ENCODE measurements at regions of chr3 and their contacts with region 1.

Region 1: GRCh38 chr3:66816090-66816761 is 181.9 kb upstream of the KBTBD8 start:
- DNase-seq: peak; percentile 84
- H3K4me3 ChIP-seq: no peak overlapping the region
- H3K27ac ChIP-seq: no peak overlapping the region
- H3K4me1 ChIP-seq: peaks cover 12% of the 10 kb centered on the region
- H3K27me3 ChIP-seq: no peaks in the 10 kb centered on the region
- CTCF ChIP-seq: peak; percentile 46; the same call in 1 of the 2 replicates

Region 2: DNA sequence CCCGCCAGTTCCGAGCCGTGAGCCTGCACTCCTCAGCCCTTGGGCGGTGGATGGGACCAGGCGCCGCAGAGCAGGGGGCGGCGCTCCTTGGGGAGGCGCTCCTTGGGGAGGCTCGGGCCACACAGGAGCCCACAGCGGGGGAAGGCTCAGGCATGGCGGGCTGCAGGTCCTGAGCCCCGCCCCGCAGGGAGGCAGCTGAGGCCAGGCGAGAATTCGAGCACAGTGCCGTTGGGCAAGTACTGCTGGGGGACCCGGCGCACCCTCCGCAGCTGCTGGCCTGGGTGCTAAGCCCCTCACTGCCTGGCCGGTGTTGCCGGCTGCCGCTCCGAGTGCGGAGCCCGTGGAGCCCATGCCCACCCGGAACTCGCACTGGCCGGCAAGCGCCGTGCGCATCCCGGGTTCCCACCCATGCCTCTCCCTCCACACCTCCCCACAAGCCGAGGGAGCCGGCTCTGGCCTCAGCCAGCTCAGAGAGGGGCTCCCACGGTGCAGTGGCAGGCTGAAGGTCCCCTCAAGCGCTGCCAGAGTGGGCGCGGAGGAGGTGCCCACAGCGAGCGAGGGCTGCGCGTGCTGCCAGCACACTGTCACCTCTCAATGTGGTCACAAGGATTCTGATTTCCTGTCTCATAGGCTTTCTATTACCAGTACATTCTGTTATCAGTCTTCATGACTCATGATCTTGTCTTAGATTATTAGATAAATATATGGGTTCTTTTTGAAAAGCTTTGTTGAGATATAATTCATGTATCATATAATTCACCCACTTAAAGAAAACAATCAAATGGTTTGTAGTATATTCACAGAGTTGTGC is 271.4 kb before region 1 on chr3:
- CTCF ChIA-PET with region 1: interaction called, 3 read pairs
- POLR2A ChIA-PET with region 1: no interaction called
- intact Hi-C with region 1: loop called (anchors 5 kb)
- DNase-seq: no peak
- H3K4me3 ChIP-seq: no peak overlapping the region
- H3K27ac ChIP-seq: no peak overlapping the region
- H3K4me1 ChIP-seq: peaks cover 11% of the 10 kb centered on the region
- H3K27me3 ChIP-seq: no peaks in the 10 kb centered on the region
- CTCF ChIP-seq: no peak

Region 3: GRCh38 chr3:66712210-66712609 is 104.0 kb before region 1 on chr3:
- CTCF ChIA-PET with region 1: no interaction called
- POLR2A ChIA-PET with region 1: no interaction called
- intact Hi-C with region 1: no loop called
- DNase-seq: no peak
- H3K4me3 ChIP-seq: no peak overlapping the region
- H3K27ac ChIP-seq: no peak overlapping the region
- H3K4me1 ChIP-seq: no peaks in the 10 kb centered on the region
- H3K27me3 ChIP-seq: no peaks in the 10 kb centered on the region
- CTCF ChIP-seq: no peak

Region 4: DNA sequence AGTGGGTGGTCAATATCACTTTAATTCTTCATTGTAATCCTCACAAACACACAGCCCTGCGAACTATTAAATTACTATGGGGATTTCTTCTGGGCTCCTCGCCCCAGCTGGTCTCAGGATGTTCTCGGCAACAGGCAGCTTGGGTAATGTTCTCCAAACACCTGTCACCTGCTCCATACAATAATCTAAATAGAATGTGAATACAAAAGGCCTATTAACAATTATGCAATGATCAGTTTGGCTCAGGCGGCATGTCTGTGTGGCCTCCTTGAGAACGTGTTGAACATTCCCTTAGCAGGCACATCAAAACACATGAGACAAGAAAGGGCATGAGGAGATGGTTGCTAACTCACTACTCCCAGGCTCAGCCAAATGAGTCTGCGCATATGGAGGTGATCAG is 23.3 kb after region 1 on chr3:
- CTCF ChIA-PET with region 1: no interaction called
- POLR2A ChIA-PET with region 1: no interaction called
- intact Hi-C with region 1: no loop called
- DNase-seq: no peak
- H3K4me3 ChIP-seq: no peak overlapping the region
- H3K27ac ChIP-seq: no peak overlapping the region
- H3K4me1 ChIP-seq: no peaks in the 10 kb centered on the region
- H3K27me3 ChIP-seq: no peaks in the 10 kb centered on the region
- CTCF ChIP-seq: no peak

Region 5: GRCh38 chr3:67118632-67119031 is 302.4 kb after region 1 on chr3:
- CTCF ChIA-PET with region 1: no interaction called
- POLR2A ChIA-PET with region 1: no interaction called
- intact Hi-C with region 1: no loop called
- DNase-seq: no peak
- H3K4me3 ChIP-seq: no peak overlapping the region
- H3K27ac ChIP-seq: no peak overlapping the region
- H3K4me1 ChIP-seq: no peaks in the 10 kb centered on the region
- H3K27me3 ChIP-seq: no peaks in the 10 kb centered on the region
- CTCF ChIP-seq: no peak

Measured in A673 (cell line).